Psoas muscle (tissue), 8 donors: ENCODE measurements at regions of chr1 and their contacts with region 1.

Region 1: GRCh38 chr1:9494929-9495758 is 44.1 kb upstream of the SLC25A33 start:
- DNase-seq: peak; percentile 57 to 82
- ATAC-seq: peak; percentile 71 to 84 (median 76)
- H3K4me3 ChIP-seq: peak overlapping the region; percentile 56
- H3K27ac ChIP-seq: no peak overlapping the region
- H3K4me1 ChIP-seq: peaks cover 6% of the 10 kb centered on the region
- H3K27me3 ChIP-seq: no peaks in the 10 kb centered on the region
- CTCF ChIP-seq: peak; percentile 99

Region 2: DNA sequence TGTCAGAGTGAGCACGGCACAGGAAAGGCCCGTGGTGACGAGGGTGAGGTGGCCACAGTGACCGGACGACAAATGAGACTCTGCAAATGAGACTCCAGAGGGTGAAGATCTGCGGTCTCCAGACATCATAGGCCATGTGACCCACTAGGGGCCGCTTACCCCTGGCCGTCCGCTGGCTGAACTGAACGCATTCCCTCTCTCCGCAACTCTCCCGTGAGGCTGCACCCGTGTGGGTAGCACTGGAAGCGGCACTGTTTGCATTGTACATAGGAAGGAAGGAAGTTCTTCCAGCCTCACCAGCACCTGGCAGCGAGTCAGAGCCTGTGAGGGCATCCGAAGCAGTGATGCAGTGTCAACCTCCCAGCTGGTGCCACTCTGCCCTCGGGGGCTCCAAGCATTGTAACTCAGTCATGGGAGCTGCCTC is 226.1 kb before region 1 on chr1:
- intact Hi-C with region 1: loop called in 1 of 2 experiments (anchors 5 kb)
- DNase-seq: peak in 1 of 2 donors; percentile 43
- ATAC-seq: peak in 1 of 4 donors; percentile 21
- H3K4me3 ChIP-seq: no peak overlapping the region
- H3K27ac ChIP-seq: no peak overlapping the region
- H3K4me1 ChIP-seq: peaks cover 34% of the 10 kb centered on the region
- H3K27me3 ChIP-seq: no peaks in the 10 kb centered on the region
- CTCF ChIP-seq: no peak

Region 3: GRCh38 chr1:9280015-9280860 is 214.9 kb before region 1 on chr1:
- intact Hi-C with region 1: loop called in 1 of 2 experiments (anchors 5 kb)
- DNase-seq: peak; percentile 82 to 88
- ATAC-seq: peak; percentile 65 to 83 (median 78)
- H3K4me3 ChIP-seq: no peak overlapping the region
- H3K27ac ChIP-seq: no peak overlapping the region
- H3K4me1 ChIP-seq: peaks cover 23% of the 10 kb centered on the region
- H3K27me3 ChIP-seq: no peaks in the 10 kb centered on the region
- CTCF ChIP-seq: no peak

Region 4: DNA sequence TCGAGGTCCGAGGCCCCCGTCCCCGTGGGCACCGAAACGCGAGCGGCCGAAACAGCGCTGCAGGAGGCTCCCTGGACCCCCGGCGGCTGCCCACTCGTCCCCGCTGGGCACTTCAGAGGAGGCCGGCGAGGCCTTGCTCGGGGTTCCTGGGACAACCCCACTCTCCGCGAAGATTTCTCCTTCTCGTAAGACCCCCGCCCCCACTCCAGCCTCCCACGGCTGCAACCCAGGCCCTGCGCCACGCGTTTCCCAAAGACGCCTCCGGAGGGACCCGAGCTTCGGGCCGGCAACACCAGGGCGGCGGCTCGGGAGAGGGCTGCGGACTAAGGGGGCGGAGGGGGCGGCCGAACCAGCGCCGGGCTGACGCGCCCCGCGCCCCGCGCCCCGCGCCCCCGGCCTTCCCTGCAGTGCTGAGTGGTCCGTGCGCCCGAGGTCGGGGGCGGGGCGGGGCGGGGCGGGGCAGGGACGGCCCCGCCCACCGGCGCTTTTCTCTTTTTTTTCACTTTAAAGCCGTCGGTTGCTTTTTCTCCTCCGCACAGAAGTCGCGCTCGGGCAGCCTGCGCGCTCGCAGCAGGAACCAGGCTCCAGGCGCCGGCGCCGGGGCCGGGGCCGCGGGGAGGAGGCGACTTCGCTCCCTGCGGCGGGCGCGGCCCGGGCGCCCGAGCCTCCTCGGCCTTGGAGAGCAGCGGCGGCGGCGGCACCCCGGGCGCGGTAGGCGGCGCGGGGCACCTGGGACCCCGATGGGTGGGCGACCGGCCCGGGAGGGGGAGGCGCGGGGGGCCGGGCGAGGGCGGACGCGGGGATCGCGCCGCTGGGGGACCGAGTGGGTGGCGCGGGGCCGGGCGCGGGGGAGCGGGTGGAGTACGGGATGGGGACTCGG is 202.5 kb before region 1 on chr1 and contains the start of gene SPSB1:
- intact Hi-C with region 1: loop called in 1 of 2 experiments (anchors 1 kb)
- DNase-seq: peak; percentile 77 to 86
- ATAC-seq: peak; percentile 38 to 64 (median 57)
- H3K4me3 ChIP-seq: peak within 1 kb of the TSS; percentile 93
- H3K27ac ChIP-seq: peak within 1 kb of the TSS; percentile 86
- H3K4me1 ChIP-seq: peaks cover 41% of the 10 kb centered on the region
- H3K27me3 ChIP-seq: no peaks in the 10 kb centered on the region
- CTCF ChIP-seq: no peak
- total RNA-seq, gene SPSB1: 12.0 to 60.7 (median 42.1) TPM

Region 5: DNA sequence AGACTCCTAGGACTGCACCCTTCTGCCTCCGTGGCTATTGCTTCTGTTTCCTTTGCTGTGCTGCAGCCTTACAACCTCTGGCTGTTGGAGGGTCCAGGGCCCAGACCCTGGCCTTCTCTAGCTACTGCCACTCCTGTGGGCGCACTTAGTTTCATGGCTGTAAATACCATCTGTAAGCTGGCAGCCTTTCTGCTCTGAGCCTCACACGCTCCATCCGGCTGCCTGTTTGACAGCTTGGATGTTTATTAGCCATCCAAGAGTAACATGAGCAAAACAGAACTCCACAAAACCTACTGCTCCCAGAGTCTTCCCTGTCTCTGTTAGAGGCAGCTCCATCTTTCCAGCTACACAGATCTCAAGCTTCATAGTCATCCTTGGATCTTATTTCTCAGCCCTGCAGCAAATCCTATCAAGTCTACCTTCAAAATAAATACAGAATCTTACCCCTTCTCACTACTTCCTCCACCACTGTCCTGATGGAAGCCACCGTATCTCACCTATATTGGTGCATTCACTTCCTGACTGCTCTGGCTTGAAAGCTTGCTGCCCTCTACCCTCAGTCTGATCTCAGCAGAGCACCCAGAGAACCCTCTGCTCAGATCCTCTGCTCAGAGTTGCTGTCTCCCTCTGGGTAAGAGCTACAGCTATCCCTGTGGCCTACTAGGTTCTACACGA is 63.3 kb after region 1 on chr1:
- intact Hi-C with region 1: loop called in 1 of 2 experiments (anchors 5 kb)
- DNase-seq: no peak
- ATAC-seq: no peak
- H3K4me3 ChIP-seq: no peak overlapping the region
- H3K27ac ChIP-seq: peak overlapping the region; percentile 42
- H3K4me1 ChIP-seq: peaks cover 54% of the 10 kb centered on the region
- H3K27me3 ChIP-seq: no peaks in the 10 kb centered on the region
- CTCF ChIP-seq: no peak

Region 6: DNA sequence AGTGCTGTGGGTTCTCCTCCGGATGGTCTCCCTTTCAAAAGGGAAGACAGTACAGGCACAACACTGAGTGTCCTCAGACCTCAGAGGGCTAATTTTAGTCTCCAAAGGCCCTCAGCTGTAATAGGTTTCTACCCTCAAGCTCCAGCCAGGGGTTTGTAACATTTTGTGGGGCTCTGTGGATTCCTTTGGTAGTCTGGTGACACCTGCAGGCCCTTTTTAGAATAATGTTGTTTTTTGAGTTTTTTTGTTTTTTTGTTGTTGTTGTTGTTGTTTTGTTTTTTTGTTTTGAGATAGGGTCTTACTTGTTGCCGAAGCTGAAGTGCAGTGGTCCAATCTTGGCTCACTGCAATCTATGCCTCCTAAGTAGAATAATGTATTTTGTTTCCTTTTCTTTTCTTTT is 78.6 kb after region 1 on chr1:
- intact Hi-C with region 1: loop called (anchors 1 to 5 kb)
- DNase-seq: no peak
- ATAC-seq: peak in 3 of 4 donors; percentile 45 to 61 (median 61)
- H3K4me3 ChIP-seq: no peak overlapping the region
- H3K27ac ChIP-seq: no peak overlapping the region
- H3K4me1 ChIP-seq: peaks cover 15% of the 10 kb centered on the region
- H3K27me3 ChIP-seq: no peaks in the 10 kb centered on the region
- CTCF ChIP-seq: peak; percentile 36